CD4-positive, alpha-beta memory T cell (primary cell): ENCODE measurements at regions of chr5 and their contacts with region 1.

Region 1: GRCh38 chr5:36507332-36507952 is 99.0 kb upstream of the SLC1A3 start:
- DNase-seq: peak; percentile 42 to 56 (median 50)
- H3K4me3 ChIP-seq: no peak overlapping the region
- H3K4me3 Mint-ChIP-seq: no peak overlapping the region
- H3K27ac ChIP-seq: no peak overlapping the region
- H3K27ac Mint-ChIP-seq: no peak overlapping the region
- H3K4me1 ChIP-seq: no peaks in the 10 kb centered on the region
- H3K4me1 Mint-ChIP-seq: no peaks in the 10 kb centered on the region
- H3K27me3 ChIP-seq: no peaks in the 10 kb centered on the region
- H3K27me3 Mint-ChIP-seq: peaks cover 7 to 10% of the 10 kb centered on the region in 2 donors

Region 2: DNA sequence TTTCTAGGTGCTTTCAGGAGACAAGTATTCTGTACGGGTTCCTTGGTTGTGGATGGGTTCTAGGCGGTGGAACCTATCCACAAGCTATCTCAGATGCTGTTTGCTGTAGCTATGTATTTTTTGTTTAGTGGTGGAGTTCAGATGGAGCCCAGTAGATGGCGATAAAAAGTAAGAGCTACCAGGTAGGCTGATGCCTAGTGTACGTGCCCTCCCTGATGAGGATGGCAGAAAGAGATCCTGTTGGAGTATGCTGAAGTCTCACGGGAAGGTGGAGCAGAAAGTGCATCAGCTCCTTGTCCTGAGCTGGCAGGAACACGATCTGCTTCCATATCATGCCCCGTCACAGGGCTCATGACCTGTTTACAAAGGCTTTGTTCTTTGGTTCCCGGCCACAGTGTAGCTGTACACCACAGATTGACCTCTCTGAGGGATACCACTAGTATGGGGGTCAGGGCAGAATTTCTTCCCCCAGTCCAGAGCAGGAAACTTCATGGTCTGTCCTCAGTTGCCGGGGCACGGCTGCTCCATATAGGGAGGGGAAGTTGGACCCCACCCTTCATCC is 428.2 kb before region 1 on chr5:
- CTCF ChIA-PET with region 1: interaction called, 53 read pairs
- POLR2A ChIA-PET with region 1: no interaction called
- intact Hi-C with region 1: no loop called
- DNase-seq: peak in 4 of 5 donors; percentile 14 to 33 (median 29)
- H3K4me3 ChIP-seq: no peak overlapping the region
- H3K4me3 Mint-ChIP-seq: no peak overlapping the region
- H3K27ac ChIP-seq: no peak overlapping the region
- H3K27ac Mint-ChIP-seq: no peak overlapping the region
- H3K4me1 ChIP-seq: no peaks in the 10 kb centered on the region
- H3K4me1 Mint-ChIP-seq: no peaks in the 10 kb centered on the region
- H3K27me3 ChIP-seq: no peaks in the 10 kb centered on the region
- H3K27me3 Mint-ChIP-seq: peaks cover 12 to 34% of the 10 kb centered on the region in 2 donors

Region 3: DNA sequence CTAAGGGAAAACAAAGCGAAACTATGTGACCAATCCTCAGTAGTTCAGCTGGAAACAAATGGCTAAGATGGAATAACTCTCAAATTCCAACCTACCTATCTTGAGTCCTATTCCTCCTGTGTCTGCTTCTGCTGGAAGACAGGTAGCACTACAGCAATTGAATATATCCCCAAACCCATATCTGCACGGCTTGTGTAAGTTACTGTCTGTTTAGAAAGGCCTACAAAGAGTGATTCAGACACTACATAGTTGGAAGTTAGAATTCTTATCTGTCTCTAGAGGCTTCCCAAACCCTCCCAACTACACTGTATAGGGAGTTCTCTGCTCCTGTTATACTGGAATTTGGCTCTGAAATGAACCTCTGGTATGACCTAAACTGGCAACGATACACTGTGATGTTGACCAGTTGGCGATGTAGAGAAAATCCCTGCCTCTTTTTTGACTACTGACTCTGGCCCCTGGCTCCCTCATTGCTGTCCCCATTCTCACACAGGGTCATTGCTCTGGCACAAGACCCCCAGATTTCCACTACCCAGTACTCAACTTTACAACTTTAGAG is 243.2 kb before region 1 on chr5:
- CTCF ChIA-PET with region 1: interaction called, 6 read pairs
- POLR2A ChIA-PET with region 1: no interaction called
- intact Hi-C with region 1: loop called (anchors 1 kb)
- DNase-seq: no peak
- H3K4me3 ChIP-seq: no peak overlapping the region
- H3K4me3 Mint-ChIP-seq: no peak overlapping the region
- H3K27ac ChIP-seq: no peak overlapping the region
- H3K27ac Mint-ChIP-seq: no peak overlapping the region
- H3K4me1 ChIP-seq: no peaks in the 10 kb centered on the region
- H3K4me1 Mint-ChIP-seq: no peaks in the 10 kb centered on the region
- H3K27me3 ChIP-seq: no peaks in the 10 kb centered on the region
- H3K27me3 Mint-ChIP-seq: peaks cover 23 to 29% of the 10 kb centered on the region in 2 donors

Region 4: DNA sequence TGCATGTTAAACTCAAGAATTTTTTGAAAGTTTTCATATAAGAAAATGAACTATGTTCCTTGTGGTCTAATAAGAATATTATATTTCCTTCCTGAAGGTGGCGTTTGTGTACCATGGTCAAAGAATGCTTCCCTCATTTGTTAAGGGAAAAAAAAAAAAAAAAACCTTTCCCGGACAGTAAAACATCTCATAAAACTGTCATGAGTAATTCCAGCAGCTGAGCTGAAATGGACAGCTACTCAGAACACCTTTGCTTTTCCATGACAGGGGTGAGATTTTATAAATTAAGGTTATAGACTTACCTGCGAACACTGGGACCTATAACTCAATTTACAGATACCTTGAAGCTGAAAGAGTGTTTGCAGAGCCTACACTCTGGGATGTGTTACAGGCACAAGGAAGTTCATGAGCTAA is 92.6 kb before region 1 on chr5:
- CTCF ChIA-PET with region 1: interaction called, 4 read pairs
- POLR2A ChIA-PET with region 1: no interaction called
- intact Hi-C with region 1: loop called (anchors 1 kb)
- DNase-seq: no peak
- H3K4me3 ChIP-seq: no peak overlapping the region
- H3K4me3 Mint-ChIP-seq: no peak overlapping the region
- H3K27ac ChIP-seq: no peak overlapping the region
- H3K27ac Mint-ChIP-seq: no peak overlapping the region
- H3K4me1 ChIP-seq: peaks cover 14% of the 10 kb centered on the region
- H3K4me1 Mint-ChIP-seq: peaks cover 4 to 12% (median 6%) of the 10 kb centered on the region in 4 donors
- H3K27me3 ChIP-seq: no peaks in the 10 kb centered on the region
- H3K27me3 Mint-ChIP-seq: peaks cover 0 to 3% of the 10 kb centered on the region in 2 donors